H1 (cell line): ENCODE measurements at regions of chr1 and their contacts with region 1.

Region 1: GRCh38 chr1:172002725-172003345 is 161.5 kb downstream of the DNM3 start:
- DNase-seq: no peak
- H3K4me3 ChIP-seq: no peak overlapping the region
- H3K27ac ChIP-seq: no peak overlapping the region
- H3K4me1 ChIP-seq: no peaks in the 10 kb centered on the region
- H3K27me3 ChIP-seq: no peaks in the 10 kb centered on the region
- CTCF ChIP-seq: peak in 2 of 3 experiments; percentile 52 to 57; a peak in 3 of 4 replicates
- EP300 ChIP-seq: no peak
- POLR2A ChIP-seq: no peak
- RAD21 ChIP-seq: peak; percentile 71 to 77

Region 2: DNA sequence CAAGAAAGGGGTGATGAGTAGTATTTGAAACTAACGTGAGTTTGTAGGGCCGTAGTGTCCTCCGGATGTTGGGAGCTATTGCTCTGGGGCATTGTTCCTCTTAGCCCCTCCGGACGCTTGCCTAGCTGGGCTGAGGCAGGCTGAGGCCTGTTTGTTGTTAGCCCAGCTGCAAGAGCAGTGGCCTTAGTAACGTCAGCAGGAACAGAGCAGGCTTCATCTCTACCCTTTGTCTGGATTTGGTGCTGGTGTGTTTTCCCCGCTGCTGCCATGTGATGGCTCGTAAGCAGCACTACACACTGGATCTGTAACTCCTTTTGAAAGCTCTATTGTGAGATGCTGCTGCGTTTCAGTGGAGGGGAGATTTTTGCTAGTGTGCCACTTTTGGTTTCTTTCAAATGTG is 103.9 kb before region 1 on chr1:
- CTCF ChIA-PET with region 1: no interaction called
- POLR2A ChIA-PET with region 1: no interaction called
- DNase-seq: peak in 1 of 2 experiments; percentile 54
- H3K4me3 ChIP-seq: no peak overlapping the region
- H3K27ac ChIP-seq: peak overlapping the region; percentile 22
- H3K4me1 ChIP-seq: peaks cover 2 to 9% (median 5%) of the 10 kb centered on the region in 4 experiments; a peak in 5 of 7 replicates
- H3K27me3 ChIP-seq: no peaks in the 10 kb centered on the region
- CTCF ChIP-seq: no peak
- EP300 ChIP-seq: no peak
- POLR2A ChIP-seq: 0 out of 3 replicates have a peak, but pooled peaks of 1 of the 2 experiments have one; percentile 30
- RAD21 ChIP-seq: no peak

Region 3: DNA sequence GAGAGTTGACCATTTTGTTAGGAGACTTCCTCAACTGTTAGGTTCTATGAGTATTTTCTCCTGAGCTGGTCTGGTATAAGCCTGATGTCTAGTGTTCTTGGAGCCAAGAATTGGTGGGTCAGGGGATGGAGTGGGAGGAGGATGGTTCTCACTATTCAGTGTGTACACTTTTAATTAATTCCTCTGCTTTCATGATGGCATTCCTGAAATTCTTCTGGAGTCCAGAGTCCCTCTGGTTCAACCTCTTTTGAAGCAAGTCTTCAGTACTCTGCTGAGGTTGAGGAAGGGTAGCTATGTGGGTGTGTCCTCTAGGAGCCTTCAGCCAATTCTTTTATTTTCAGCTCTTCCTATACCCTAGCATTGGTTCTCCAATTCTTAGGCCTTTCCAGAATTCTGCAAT is 12.5 kb before region 1 on chr1:
- CTCF ChIA-PET with region 1: interaction called, 87 read pairs
- POLR2A ChIA-PET with region 1: no interaction called
- DNase-seq: no peak
- H3K4me3 ChIP-seq: no peak overlapping the region
- H3K27ac ChIP-seq: no peak overlapping the region
- H3K4me1 ChIP-seq: no peaks in the 10 kb centered on the region
- H3K27me3 ChIP-seq: no peaks in the 10 kb centered on the region
- CTCF ChIP-seq: no peak
- EP300 ChIP-seq: no peak
- POLR2A ChIP-seq: no peak
- RAD21 ChIP-seq: no peak